ENCODE measurements at regions of chr4 and their contacts with region 1.

Region 1: GRCh38 chr4:38523524-38524448 is 140.2 kb upstream of the KLF3 start:
- DNase-seq: peak; percentile 87
- H3K4me3 Mint-ChIP-seq: peak overlapping the region; percentile 54
- H3K27ac Mint-ChIP-seq: peak overlapping the region; percentile 68
- H3K4me1 Mint-ChIP-seq: peaks cover 30% of the 10 kb centered on the region
- H3K27me3 Mint-ChIP-seq: peaks cover 20% of the 10 kb centered on the region

Region 2: GRCh38 chr4:38319456-38320342 is 204.1 kb before region 1 on chr4:
- CTCF ChIA-PET with region 1: interaction called, 3 read pairs
- POLR2A ChIA-PET with region 1: no interaction called
- intact Hi-C with region 1: loop called (anchors 1 kb)
- DNase-seq: peak; percentile 95
- H3K4me3 Mint-ChIP-seq: peak overlapping the region; percentile 77
- H3K27ac Mint-ChIP-seq: peak overlapping the region; percentile 85
- H3K4me1 Mint-ChIP-seq: peaks cover 34% of the 10 kb centered on the region
- H3K27me3 Mint-ChIP-seq: no peaks in the 10 kb centered on the region

Region 3: DNA sequence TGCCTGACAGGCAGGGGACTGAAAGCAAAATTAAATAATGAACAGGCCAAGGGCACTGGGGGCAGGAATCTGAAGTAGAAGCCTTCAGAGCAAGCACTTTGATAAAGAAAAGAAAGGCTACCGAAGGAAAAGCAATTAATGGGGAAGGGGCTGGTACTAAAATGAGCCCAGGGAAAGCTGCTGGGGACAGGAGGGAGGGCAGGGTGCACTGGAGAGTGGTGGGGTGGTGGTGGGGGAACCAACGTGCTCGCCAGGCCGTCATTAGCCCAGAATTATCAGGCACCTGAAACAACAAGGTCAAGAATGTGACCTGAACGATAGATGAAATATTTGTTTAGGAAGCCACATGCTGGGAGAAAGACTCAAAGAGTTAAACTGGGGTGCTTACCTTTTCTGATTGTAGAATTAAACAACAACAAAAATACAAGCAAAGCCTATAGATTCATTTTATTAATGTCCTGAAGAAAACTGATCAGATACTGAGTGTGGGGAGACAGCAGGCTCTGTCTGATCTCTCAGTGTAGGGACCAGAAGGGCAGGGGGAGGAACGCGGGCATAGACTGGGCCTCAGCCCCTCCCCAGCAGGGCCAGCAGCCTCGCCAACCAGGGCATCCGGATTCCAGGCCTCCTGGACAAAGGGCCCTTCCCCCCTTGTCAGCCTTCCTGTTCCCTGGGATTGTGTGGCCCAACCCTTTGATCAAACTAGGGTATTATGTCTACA is 99.5 kb before region 1 on chr4:
- CTCF ChIA-PET with region 1: no interaction called
- POLR2A ChIA-PET with region 1: no interaction called
- intact Hi-C with region 1: no loop called
- DNase-seq: no peak
- H3K4me3 Mint-ChIP-seq: no peak overlapping the region
- H3K27ac Mint-ChIP-seq: no peak overlapping the region
- H3K4me1 Mint-ChIP-seq: peaks cover 5% of the 10 kb centered on the region
- H3K27me3 Mint-ChIP-seq: no peaks in the 10 kb centered on the region

Region 4: GRCh38 chr4:38503689-38504395 is 19.9 kb before region 1 on chr4:
- CTCF ChIA-PET with region 1: no interaction called
- POLR2A ChIA-PET with region 1: interaction called, 3 read pairs
- intact Hi-C with region 1: loop called (anchors 1 kb)
- DNase-seq: no peak
- H3K4me3 Mint-ChIP-seq: no peak overlapping the region
- H3K27ac Mint-ChIP-seq: no peak overlapping the region
- H3K4me1 Mint-ChIP-seq: peaks cover 43% of the 10 kb centered on the region
- H3K27me3 Mint-ChIP-seq: no peaks in the 10 kb centered on the region

Region 5: DNA sequence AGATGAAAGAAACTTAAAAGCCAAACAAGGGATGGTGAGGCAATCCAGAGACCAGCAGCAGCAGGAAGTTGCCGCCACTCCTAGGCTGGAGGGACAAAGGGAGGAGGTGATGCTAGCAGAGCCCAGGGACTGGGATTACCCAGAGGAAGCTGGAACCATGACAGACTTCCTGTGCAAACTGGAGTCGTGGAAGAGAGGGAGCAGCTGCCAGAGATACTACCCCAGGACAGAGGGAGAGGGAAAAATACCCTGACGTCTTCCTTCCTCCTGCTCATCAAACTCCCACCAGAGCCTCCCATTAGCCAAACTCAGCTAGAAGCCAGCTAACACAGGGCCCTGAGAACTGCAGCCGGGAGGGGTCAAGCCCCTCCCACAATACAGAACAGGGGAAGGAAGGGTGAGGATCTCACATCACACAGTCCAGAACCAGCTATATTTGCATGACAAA is 39.0 kb after region 1 on chr4:
- CTCF ChIA-PET with region 1: no interaction called
- POLR2A ChIA-PET with region 1: interaction called, 8 read pairs
- intact Hi-C with region 1: loop called (anchors 1 kb)
- DNase-seq: no peak
- H3K4me3 Mint-ChIP-seq: no peak overlapping the region
- H3K27ac Mint-ChIP-seq: no peak overlapping the region
- H3K4me1 Mint-ChIP-seq: peaks cover 20% of the 10 kb centered on the region
- H3K27me3 Mint-ChIP-seq: peaks cover 18% of the 10 kb centered on the region

Region 6: DNA sequence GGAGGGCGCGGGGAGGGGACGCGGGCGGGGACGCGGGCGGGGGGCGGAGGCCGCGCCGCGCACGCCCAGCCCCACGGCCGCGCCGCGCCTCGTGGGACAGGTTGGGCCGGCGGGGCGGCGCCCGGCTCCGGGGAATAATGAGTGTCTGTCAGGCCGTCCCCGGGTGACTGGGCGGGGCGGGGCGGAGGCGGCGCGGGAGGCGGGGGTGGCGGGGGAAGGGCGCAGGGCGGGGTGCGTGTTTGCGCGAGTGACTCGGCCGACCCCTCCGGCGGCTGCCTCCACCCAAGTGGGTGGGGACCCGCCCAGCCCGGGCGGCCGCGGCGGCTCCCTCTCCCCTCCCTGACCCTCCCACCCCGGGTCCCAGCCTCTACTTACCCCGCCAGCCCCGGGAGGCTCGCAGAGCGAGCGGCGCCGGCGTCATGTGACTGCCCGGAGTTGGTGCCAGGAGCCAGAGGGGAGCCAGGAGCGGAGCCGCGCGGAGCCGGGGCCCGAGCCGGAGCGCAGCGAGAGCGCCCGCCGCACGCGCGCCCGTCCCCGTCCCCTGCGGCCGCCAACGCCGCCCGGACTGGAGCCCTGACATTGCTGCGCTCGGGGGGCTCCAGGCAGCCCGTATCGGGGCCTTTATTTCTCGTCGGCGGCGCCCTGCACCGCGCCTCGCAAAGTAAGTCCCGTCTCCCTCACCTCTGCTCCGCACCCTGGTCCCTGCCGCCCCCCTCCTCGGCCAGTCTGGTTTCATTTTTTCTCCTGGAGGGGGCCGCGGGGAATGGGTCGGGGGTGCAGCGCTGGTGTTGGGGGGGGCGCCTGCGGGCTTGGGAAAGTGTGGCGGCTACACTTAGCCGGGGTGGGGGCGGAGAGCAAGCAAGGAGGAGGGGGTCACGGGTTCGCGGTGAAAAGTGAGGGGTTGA is 140.3 kb after region 1 on chr4 and contains the start of gene KLF3:
- CTCF ChIA-PET with region 1: no interaction called
- POLR2A ChIA-PET with region 1: no interaction called
- intact Hi-C with region 1: loop called (anchors 2 kb)
- DNase-seq: peak; percentile 86
- H3K4me3 Mint-ChIP-seq: peak within 1 kb of the TSS; percentile 83
- H3K27ac Mint-ChIP-seq: peak within 1 kb of the TSS; percentile 68
- H3K4me1 Mint-ChIP-seq: peaks cover 61% of the 10 kb centered on the region
- H3K27me3 Mint-ChIP-seq: no peaks in the 10 kb centered on the region
- total RNA-seq, gene KLF3: 9.1 to 9.9 TPM

Region 7: DNA sequence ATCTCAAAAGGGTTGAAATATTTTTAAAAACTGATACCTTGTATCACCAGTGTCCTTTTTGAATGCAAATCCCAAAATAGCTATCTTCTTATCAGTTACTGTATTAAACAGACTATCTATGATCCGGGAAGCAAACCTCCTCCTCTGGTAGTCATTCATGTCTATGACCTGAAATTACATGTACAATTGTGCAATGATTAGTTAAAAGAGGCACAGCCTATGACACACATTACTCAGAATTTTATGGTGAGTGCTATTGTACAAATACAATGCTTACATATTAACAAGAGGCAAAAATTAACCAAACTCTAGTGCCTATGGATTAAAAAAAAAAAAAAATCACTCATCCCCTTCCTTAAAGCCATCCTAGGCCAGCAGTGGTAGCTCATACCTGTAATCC is 981.8 kb after region 1 on chr4:
- CTCF ChIA-PET with region 1: no interaction called
- POLR2A ChIA-PET with region 1: no interaction called
- intact Hi-C with region 1: no loop called
- DNase-seq: no peak
- H3K4me3 Mint-ChIP-seq: no peak overlapping the region
- H3K27ac Mint-ChIP-seq: no peak overlapping the region
- H3K4me1 Mint-ChIP-seq: no peaks in the 10 kb centered on the region
- H3K27me3 Mint-ChIP-seq: no peaks in the 10 kb centered on the region

Measured in activated CD4-positive, alpha-beta memory T cell treated with anti-CD3 and anti-CD28 coated beads for 36 hours (primary cell).